GM12878 (cell line): ENCODE measurements at regions of chr1 and their contacts with region 1.

Region 1: DNA sequence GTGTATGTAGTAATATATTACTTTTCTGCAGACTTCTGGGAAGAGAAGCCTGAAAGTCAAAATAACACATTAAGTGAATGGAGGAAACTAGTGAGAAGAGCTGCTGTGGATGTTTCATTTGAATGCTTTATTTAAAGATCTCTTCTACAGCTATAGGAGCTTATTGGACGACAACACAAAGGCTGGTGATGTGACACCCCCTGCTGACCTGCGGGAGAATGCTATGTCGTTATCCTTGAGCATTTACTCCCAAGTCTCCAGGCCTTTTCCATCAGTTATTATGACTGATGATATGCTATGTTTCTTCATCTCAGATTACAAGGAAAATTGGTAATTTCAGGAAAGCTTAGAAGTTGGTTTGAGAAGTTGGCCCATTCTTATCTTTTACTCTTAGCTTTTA is 22.3 kb upstream of the PLA2G4A start:
- DNase-seq: no peak
- ATAC-seq: peak; percentile 46; the same call in 1 of the 3 replicates
- H3K4me3 ChIP-seq: no peak overlapping the region
- H3K27ac ChIP-seq: no peak overlapping the region
- H3K4me1 ChIP-seq: peaks cover 3% of the 10 kb centered on the region
- H3K27me3 ChIP-seq: no peaks in the 10 kb centered on the region
- CTCF ChIP-seq: peak; percentile 25 to 55 (median 49); a peak in 5 of 6 replicates
- EP300 ChIP-seq: no peak
- POLR2A ChIP-seq: no peak
- RAD21 ChIP-seq: peak; percentile 73

Region 2: GRCh38 chr1:186605762-186606350 is 200.6 kb before region 1 on chr1:
- CTCF ChIA-PET with region 1: interaction called, 17 read pairs
- POLR2A ChIA-PET with region 1: no interaction called
- RAD21 ChIA-PET with region 1: no interaction called
- SMC1A ChIA-PET with region 1: interaction called, 4 read pairs
- in situ Hi-C with region 1: loop called (anchors 10 kb)
- intact Hi-C with region 1: loop called (anchors 1 kb)
- DNase-seq: no peak
- ATAC-seq: peak; percentile 89
- H3K4me3 ChIP-seq: no peak overlapping the region
- H3K27ac ChIP-seq: no peak overlapping the region
- H3K4me1 ChIP-seq: no peaks in the 10 kb centered on the region
- H3K27me3 ChIP-seq: no peaks in the 10 kb centered on the region; a peak in 1 of 4 replicates
- CTCF ChIP-seq: peak; percentile 66 to 83 (median 70)
- EP300 ChIP-seq: no peak
- POLR2A ChIP-seq: no peak
- RAD21 ChIP-seq: peak; percentile 92

Region 3: DNA sequence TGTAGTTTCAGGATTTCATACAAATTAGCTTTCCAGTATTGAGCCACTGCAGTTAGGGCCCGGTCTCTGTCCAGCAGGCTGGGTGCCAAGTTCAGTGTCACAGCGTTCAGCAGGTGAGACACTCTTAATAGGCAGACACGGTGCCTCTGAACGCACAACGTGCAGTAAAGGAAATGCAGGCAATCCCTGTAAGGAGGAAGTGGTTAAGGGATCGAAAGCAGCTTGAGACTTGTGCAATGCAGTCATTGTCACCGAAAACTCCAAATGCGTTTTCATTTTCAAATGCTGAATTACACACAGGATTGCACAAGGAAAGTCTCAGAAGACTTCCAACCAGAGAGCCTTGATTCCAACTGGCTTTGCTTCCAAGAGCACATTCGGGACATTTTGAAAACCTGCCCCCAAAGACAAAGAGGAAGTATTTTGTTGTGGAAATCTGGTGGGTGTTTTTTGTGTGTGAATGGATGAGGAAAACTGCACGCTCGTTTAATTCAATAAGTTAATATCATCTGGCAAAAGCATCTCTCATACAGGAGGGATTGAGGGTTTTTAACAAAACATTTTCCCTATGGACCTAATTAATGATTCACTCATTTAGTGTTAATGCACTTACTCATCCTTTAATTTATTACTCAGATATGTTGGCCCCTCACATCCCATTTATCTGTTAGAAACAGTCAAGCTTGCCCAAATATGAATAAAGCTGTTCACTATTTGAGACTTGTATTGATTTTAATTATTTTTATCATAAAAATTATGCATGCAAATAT is 187.9 kb before region 1 on chr1:
- CTCF ChIA-PET with region 1: no interaction called
- POLR2A ChIA-PET with region 1: no interaction called
- RAD21 ChIA-PET with region 1: interaction called, 3 read pairs
- SMC1A ChIA-PET with region 1: no interaction called
- in situ Hi-C with region 1: loop called (anchors 10 kb)
- intact Hi-C with region 1: no loop called
- DNase-seq: peak; percentile 73
- ATAC-seq: peak; percentile 96
- H3K4me3 ChIP-seq: peak overlapping the region; percentile 45; the same call in 1 of the 2 replicates
- H3K27ac ChIP-seq: no peak overlapping the region
- H3K4me1 ChIP-seq: peaks cover 18% of the 10 kb centered on the region
- H3K27me3 ChIP-seq: no peaks in the 10 kb centered on the region
- CTCF ChIP-seq: no peak
- EP300 ChIP-seq: no peak
- POLR2A ChIP-seq: no peak
- RAD21 ChIP-seq: 0 out of 2 replicates have a peak, but pooled peaks have one; percentile 2

Region 4: DNA sequence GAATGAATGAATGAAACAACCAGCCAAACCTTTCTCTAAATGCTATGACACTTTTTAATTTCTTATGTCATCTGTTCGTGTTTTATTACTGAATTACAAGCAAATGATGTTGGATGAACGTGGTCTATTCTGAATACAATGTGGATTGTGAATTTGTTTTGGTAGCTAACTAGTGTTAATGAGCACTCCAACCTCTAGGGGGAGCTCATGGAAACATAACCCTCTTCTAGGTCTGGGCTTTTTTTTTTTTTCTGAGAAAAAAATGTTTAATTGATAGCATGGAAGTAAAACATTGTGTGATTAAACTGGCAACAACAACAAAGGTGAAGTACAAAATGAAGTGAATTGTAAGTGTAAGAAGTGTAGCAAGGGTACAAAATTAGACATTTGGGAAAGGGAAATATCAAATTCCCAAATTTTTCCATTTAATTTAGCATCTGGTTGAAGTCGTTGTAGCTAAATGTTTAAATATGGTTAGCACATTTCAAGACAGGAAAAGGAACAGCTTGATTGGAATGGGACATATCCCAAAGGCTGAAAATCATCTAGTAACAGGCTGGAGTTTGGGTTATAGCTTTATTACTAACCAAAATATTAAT is 83.7 kb before region 1 on chr1:
- CTCF ChIA-PET with region 1: interaction called, 7 read pairs
- POLR2A ChIA-PET with region 1: no interaction called
- RAD21 ChIA-PET with region 1: no interaction called
- SMC1A ChIA-PET with region 1: interaction called, 6 read pairs
- in situ Hi-C with region 1: no loop called
- intact Hi-C with region 1: loop called (anchors 1 kb)
- DNase-seq: no peak
- ATAC-seq: peak; percentile 76
- H3K4me3 ChIP-seq: no peak overlapping the region
- H3K27ac ChIP-seq: no peak overlapping the region
- H3K4me1 ChIP-seq: no peaks in the 10 kb centered on the region
- H3K27me3 ChIP-seq: no peaks in the 10 kb centered on the region
- CTCF ChIP-seq: peak; percentile 48 to 73 (median 56)
- EP300 ChIP-seq: no peak
- POLR2A ChIP-seq: no peak
- RAD21 ChIP-seq: peak; percentile 80

Region 5: DNA sequence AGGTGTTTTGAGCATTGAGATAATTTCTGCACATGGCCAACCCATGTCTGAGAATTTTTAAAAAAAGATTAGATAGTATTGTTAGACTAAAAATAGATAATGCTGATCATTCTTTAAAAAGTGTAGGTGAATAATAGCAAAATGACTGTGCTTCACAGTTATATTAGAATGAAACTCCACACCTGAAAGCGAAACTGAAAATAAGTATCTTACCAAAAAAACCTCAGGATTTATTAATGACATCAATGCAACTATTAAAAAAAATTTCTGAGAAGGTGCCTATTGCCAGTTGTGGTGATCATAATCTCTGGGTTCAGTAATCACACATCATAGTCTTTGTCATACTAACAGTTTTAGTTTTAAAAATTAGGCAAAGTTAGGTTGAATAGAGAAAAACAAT is 58.8 kb after region 1 on chr1:
- CTCF ChIA-PET with region 1: no interaction called
- POLR2A ChIA-PET with region 1: no interaction called
- RAD21 ChIA-PET with region 1: no interaction called
- SMC1A ChIA-PET with region 1: no interaction called
- in situ Hi-C with region 1: no loop called
- intact Hi-C with region 1: loop called (anchors 10 kb)
- DNase-seq: peak; percentile 25
- ATAC-seq: peak; percentile 84
- H3K4me3 ChIP-seq: no peak overlapping the region
- H3K27ac ChIP-seq: no peak overlapping the region
- H3K4me1 ChIP-seq: no peaks in the 10 kb centered on the region
- H3K27me3 ChIP-seq: no peaks in the 10 kb centered on the region
- CTCF ChIP-seq: no peak
- EP300 ChIP-seq: peak; percentile 48 to 52; a peak in 2 of 4 replicates
- POLR2A ChIP-seq: no peak
- RAD21 ChIP-seq: no peak